BJ (cell line): ENCODE measurements at regions of chr13 and their contacts with region 1.

Region 1: DNA sequence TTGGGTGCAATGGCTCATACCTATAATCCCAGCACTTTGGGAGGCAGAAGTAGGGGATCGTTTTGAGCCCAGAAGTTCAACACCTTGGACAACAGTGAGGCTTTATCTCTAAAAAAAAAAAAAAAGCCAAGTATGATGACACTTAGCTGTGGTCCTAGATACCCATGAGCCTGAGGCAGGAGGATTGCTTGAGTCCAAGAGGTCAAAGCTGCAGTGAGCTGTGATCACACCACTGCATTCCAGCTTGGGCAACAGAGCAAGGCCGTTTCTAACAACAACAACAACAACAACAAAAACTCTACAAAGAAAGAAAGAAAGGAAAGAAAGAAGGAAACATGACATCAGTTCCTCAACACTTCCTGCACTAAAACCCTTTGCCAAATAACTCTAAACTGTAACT is 265.1 kb upstream of the DACH1 start:
- DNase-seq: no peak
- H3K4me3 ChIP-seq: no peak overlapping the region
- H3K27me3 ChIP-seq: no peaks in the 10 kb centered on the region
- CTCF ChIP-seq: no peak

Region 2: GRCh38 chr13:71591374-71591773 is 540.7 kb before region 1 on chr13:
- CTCF ChIA-PET with region 1: no interaction called
- POLR2A ChIA-PET with region 1: no interaction called
- DNase-seq: no peak
- H3K4me3 ChIP-seq: no peak overlapping the region
- H3K27me3 ChIP-seq: no peaks in the 10 kb centered on the region
- CTCF ChIP-seq: no peak

Region 3: GRCh38 chr13:72384879-72385278 is 252.8 kb after region 1 on chr13:
- CTCF ChIA-PET with region 1: no interaction called
- POLR2A ChIA-PET with region 1: interaction called, 11 read pairs
- DNase-seq: no peak
- H3K4me3 ChIP-seq: no peak overlapping the region
- H3K27me3 ChIP-seq: no peaks in the 10 kb centered on the region
- CTCF ChIP-seq: no peak